T-cell (primary cell): ENCODE measurements at regions of chr7 and their contacts with region 1.

Region 1: DNA sequence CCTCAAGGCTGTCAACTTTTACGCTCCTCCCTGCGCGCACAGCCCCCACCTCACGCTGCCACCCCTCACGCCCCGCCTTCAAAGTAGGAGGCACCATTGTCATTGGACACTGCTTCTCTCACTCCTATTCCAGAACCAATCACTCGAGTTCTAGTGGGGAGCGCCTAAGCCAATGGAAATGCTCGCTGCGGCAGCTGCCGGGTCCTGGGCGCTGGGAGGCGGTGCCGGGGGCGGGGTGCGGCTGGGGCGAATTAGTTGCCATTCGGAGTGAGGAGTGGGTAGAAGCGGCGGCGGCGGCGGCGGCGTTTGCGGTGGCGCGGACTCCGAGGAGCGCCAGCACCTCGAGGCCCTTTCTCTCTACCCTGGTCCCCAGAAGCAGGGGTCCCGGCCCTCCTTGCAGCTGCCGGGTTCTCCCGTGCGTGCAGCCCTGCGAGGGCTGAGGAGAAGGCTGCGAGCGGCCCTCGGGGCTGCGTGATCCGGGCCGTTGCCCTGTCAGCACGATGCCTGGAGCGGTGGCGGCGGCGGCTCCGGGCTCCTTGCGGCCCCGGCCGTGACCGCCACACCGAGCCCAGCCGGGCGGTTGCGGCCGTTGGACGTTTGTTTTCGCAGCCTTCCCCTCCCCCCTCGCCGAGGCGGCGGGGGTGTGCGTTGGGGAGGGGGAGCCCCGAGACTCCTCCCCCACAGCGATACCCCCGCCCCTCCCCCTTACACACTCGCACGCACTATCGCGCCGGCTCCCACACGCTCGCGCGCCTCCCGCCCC is at the start of gene GLCCI1:
- DNase-seq: peak; percentile 92 to 98 (median 96)
- ATAC-seq: peak; percentile 88 to 90 (median 89)
- H3K4me3 ChIP-seq: peak within 1 kb of the TSS; percentile 86 to 98
- H3K4me3 Mint-ChIP-seq: peak within 1 kb of the TSS in 2 of 3 donors; percentile 89 to 92
- H3K27ac ChIP-seq: peak within 1 kb of the TSS; percentile 82
- H3K27ac Mint-ChIP-seq: peak within 1 kb of the TSS; percentile 90 to 92
- H3K4me1 ChIP-seq: peaks cover 8 to 53% of the 10 kb centered on the region in 2 experiments
- H3K4me1 Mint-ChIP-seq: peaks cover 26 to 33% (median 33%) of the 10 kb centered on the region in 3 donors
- H3K27me3 ChIP-seq: no peaks in the 10 kb centered on the region
- H3K27me3 Mint-ChIP-seq: no peaks in the 10 kb centered on the region
- total RNA-seq, gene GLCCI1: 30.6 to 51.5 (median 38.0) TPM

Region 2: GRCh38 chr7:7989133-7989984 is 20.6 kb after region 1 on chr7:
- CTCF ChIA-PET with region 1: interaction called in 1 of 2 experiments, 13 read pairs
- POLR2A ChIA-PET with region 1: interaction called, 3 to 11 read pairs
- DNase-seq: peak in 1 of 35 experiments; percentile 21
- ATAC-seq: peak; percentile 50 to 67 (median 58)
- H3K4me3 ChIP-seq: peak overlapping the region in 1 of 2 donors; percentile 23
- H3K4me3 Mint-ChIP-seq: peak overlapping the region; percentile 59 to 73 (median 64)
- H3K27ac ChIP-seq: peak overlapping the region; percentile 59
- H3K27ac Mint-ChIP-seq: peak overlapping the region; percentile 84 to 85
- H3K4me1 ChIP-seq: peaks cover 0 to 20% of the 10 kb centered on the region in 2 experiments
- H3K4me1 Mint-ChIP-seq: peaks cover 60 to 64% (median 63%) of the 10 kb centered on the region in 3 donors
- H3K27me3 ChIP-seq: no peaks in the 10 kb centered on the region
- H3K27me3 Mint-ChIP-seq: no peaks in the 10 kb centered on the region

Region 3: DNA sequence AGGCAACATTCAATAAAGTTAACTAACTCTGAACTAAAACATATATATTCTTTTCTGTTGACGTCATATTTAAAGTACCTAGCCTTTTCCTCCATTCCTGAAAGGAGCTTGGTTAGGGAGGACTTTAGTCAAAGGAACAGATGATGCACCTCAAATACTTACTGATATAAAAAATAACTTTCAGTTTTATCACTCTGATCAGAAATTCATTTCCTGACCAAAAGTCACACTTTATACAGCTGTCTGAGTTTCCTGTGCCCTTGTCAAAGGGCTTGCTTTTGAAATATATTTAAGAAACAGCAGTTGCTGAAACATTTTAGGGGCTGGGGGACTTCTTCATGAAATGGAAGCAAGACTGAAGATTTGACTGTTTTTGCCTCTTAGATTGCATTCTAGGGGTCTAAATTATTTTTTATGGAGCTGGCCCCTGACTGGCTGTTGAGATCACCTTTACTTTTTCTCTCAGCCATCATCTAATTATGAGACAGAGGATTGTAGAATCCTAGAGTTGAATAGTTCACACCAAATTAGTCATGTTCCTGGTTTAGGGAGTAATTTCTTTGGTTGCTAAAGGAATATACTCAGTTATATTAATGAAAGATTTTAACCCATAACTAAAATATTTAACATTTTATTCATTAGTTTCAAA is 46.5 kb after region 1 on chr7:
- CTCF ChIA-PET with region 1: no interaction called
- POLR2A ChIA-PET with region 1: interaction called, 6 to 19 read pairs
- DNase-seq: peak in 2 of 35 experiments; percentile 2 to 58
- ATAC-seq: peak; percentile 69 to 91 (median 84)
- H3K4me3 ChIP-seq: peak overlapping the region in 1 of 2 donors; percentile 1
- H3K4me3 Mint-ChIP-seq: peak overlapping the region in 2 of 3 donors; percentile 6 to 58
- H3K27ac ChIP-seq: peak overlapping the region; percentile 68
- H3K27ac Mint-ChIP-seq: peak overlapping the region; percentile 79 to 85
- H3K4me1 ChIP-seq: peaks cover 8 to 17% of the 10 kb centered on the region in 2 experiments
- H3K4me1 Mint-ChIP-seq: peaks cover 45 to 52% (median 50%) of the 10 kb centered on the region in 3 donors
- H3K27me3 ChIP-seq: no peaks in the 10 kb centered on the region
- H3K27me3 Mint-ChIP-seq: no peaks in the 10 kb centered on the region

Region 4: GRCh38 chr7:8068892-8069686 is 100.4 kb after region 1 on chr7:
- CTCF ChIA-PET with region 1: no interaction called
- POLR2A ChIA-PET with region 1: no interaction called
- DNase-seq: no peak
- ATAC-seq: no peak
- H3K4me3 ChIP-seq: no peak overlapping the region
- H3K4me3 Mint-ChIP-seq: no peak overlapping the region
- H3K27ac ChIP-seq: no peak overlapping the region
- H3K27ac Mint-ChIP-seq: peak overlapping the region in 1 of 2 donors; percentile 40
- H3K4me1 ChIP-seq: peaks cover 0 to 7% of the 10 kb centered on the region in 2 experiments
- H3K4me1 Mint-ChIP-seq: peaks cover 43 to 60% (median 51%) of the 10 kb centered on the region in 3 donors
- H3K27me3 ChIP-seq: no peaks in the 10 kb centered on the region
- H3K27me3 Mint-ChIP-seq: no peaks in the 10 kb centered on the region